ENCODE measurements at regions of chr20 and their contacts with region 1.

Region 1: GRCh38 chr20:48921151-48921898 is at the start of gene ARFGEF2:
- DNase-seq: peak; percentile 83 to 96 (median 92)
- H3K4me3 ChIP-seq: peak within 1 kb of the TSS; percentile 66 to 100 (median 94)
- H3K27ac ChIP-seq: peak within 1 kb of the TSS; percentile 59 to 98 (median 91)
- H3K27me3 ChIP-seq: no peaks in the 10 kb centered on the region
- CTCF ChIP-seq: peak in 32 of 56 donors; percentile 10 to 64 (median 34)
- total RNA-seq, gene ARFGEF2: 28.4 to 72.0 (median 52.6) TPM

Region 2: GRCh38 chr20:47086316-47086715 is 1835.0 kb before region 1 on chr20:
- intact Hi-C with region 1: no loop called
- DNase-seq: no peak
- H3K4me3 ChIP-seq: no peak overlapping the region
- H3K27ac ChIP-seq: no peak overlapping the region
- H3K27me3 ChIP-seq: peaks cover 0 to 2% (median 0%) of the 10 kb centered on the region in 45 donors
- CTCF ChIP-seq: no peak

Region 3: DNA sequence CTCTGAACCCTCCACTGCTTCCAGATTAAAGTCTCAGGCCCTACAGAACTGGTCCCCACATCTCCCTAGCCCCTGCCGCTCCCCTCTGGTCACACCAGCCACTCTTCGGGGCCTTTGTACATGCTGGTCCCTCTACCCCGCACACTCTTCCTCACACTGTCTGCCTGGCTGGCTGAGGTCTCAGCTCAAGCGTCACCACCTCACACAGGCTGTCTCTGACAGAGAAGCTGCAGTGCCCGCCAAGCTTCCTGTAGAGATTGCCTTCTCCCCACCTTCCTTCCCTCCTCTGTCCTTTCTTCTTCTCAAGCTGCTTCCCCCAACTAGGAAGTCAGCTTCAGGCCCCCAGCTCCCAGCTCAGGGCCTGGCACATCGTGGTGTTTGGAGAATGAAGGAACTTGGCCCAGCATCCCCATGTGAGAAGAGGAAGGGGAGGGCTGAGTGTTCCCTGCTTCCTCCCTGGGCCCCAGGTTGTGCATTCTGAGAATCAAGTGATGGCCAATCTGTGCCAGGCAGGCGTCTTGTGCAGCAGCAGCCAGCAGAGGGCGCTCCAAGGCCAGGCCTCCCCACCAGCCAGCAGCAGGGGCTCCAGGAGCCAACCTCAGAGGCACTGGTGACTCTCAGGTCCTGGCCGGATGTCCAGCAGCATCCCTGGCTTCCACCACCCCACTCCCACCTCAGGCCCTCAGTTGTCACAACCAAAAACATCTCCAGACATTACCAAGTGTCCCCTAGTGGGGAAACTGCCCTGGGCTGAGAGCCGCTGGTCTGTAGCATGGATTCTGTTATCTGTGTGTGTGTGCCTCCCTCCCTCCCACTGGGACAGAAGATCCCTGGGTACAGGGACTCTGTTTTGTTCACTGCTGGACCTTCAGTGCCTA is 285.7 kb before region 1 on chr20:
- intact Hi-C with region 1: loop called in 1 of 2 experiments (anchors 5 kb)
- DNase-seq: peak; percentile 32 to 88 (median 76)
- H3K4me3 ChIP-seq: no peak overlapping the region
- H3K27ac ChIP-seq: peak overlapping the region in 58 of 59 donors; percentile 33 to 95 (median 81)
- H3K27me3 ChIP-seq: no peaks in the 10 kb centered on the region
- CTCF ChIP-seq: peak; percentile 65 to 96 (median 86)

Region 4: DNA sequence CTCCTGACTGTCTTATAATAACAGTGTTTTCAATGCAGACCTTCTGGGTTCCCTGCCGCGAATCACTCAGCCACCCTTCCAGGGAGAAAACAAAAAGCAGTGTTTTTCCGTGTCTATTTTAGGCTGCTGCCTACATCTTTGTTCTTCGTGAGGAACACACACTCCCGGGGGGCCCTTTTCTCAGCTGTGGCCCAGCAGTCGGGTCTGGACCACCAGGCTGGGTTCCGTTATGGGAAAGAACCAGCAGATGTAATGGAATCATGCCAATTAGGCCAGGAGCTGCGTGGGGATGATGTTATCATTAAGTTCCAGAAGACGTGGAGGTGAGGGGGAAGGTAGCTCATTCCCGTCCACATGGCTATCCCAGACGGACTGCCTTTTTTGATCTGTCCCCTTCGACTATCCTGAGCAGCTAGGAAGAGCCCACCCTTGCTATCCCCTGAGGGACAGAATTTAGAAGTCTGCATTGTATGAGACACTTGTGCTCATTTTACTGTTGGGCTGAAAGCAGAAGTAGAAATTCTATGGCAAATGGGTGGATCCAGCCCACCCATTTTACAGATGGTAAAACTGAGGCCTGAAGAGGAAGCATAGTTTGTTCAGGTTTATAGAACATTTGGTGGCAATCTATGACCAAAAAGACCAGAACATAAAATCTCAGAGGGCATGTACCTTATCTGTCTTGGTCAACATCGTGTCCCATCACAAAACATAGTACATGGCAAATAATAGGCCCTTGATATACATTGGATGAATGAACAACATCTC is 506.6 kb after region 1 on chr20:
- intact Hi-C with region 1: no loop called
- DNase-seq: peak in 5 of 10 donors; percentile 24 to 69 (median 51)
- H3K4me3 ChIP-seq: peak overlapping the region in 1 of 59 donors; percentile 5
- H3K27ac ChIP-seq: peak overlapping the region in 56 of 59 donors; percentile 0 to 94 (median 81)
- H3K27me3 ChIP-seq: peaks cover 0 to 5% (median 0%) of the 10 kb centered on the region in 45 donors
- CTCF ChIP-seq: no peak

Measured in dorsolateral prefrontal cortex (tissue), 120 donors.